Testis (tissue), 5 donors: ENCODE measurements at regions of chr4 and their contacts with region 1.

Region 1: DNA sequence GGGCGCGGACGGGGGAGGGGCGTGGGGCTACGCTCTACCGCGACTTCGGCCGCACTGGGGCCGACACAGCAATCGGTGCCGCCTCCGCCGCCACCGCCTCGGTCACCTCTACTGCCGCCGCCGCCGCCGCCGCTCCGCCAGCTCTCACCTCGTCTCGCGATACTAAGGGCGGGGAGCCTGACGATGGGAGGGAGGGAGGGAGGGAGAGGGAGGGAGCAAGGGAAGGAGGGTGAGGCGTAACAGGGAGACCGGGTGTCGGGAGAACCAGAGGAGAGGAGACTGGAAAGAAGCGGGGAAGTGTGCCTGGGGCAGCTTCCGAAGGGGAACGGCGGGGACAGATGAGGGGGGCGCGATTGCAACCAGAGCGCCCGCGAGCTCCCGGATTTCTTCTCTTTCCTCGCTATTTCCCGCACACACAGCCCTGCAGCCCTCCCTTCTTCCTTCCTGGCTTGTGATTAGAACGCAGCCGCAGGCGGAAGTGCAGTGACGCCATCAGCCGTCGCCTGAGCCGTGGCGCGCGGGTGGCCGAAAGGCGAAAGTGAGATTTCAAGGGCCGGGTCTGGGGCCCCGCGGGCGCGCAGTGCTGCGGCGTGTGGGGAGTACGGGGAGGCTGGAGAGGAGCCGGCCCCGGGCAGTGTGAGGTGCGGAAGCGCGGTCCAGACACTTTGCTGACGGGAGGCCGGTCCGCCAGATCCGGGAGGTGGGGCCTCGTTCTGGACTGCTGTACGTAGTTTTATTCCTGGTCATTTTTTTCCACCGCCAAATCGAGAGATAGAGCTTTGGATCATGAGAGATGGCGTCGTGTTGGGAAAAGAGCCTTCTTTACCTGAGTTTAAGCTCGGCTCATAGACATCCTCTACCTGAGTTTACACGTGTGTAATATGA is at the start of gene ANKRD17:
- DNase-seq: peak; percentile 93
- H3K4me3 ChIP-seq: peak within 1 kb of the TSS; percentile 91 to 93
- H3K27ac ChIP-seq: peak within 1 kb of the TSS; percentile 96 to 98
- H3K4me1 ChIP-seq: peaks cover 12% of the 10 kb centered on the region
- H3K27me3 ChIP-seq: no peaks in the 10 kb centered on the region
- CTCF ChIP-seq: peak in 2 of 3 experiments; percentile 20 to 58
- POLR2A ChIP-seq: no peak
- total RNA-seq, gene ANKRD17: 68.9 to 78.3 TPM

Region 2: GRCh38 chr4:73069338-73070073 is 189.4 kb before region 1 on chr4 and contains the start of gene COX18:
- intact Hi-C with region 1: loop called (anchors 1 kb)
- DNase-seq: peak; percentile 98
- H3K4me3 ChIP-seq: peak within 1 kb of the TSS; percentile 91 to 93
- H3K27ac ChIP-seq: peak within 1 kb of the TSS; percentile 87 to 89
- H3K4me1 ChIP-seq: peaks cover 20% of the 10 kb centered on the region
- H3K27me3 ChIP-seq: no peaks in the 10 kb centered on the region
- CTCF ChIP-seq: no peak
- POLR2A ChIP-seq: peak; percentile 24
- total RNA-seq, gene COX18: 32.7 to 38.0 TPM